ENCODE measurements at regions of chr2 and their contacts with region 1.

Region 1: GRCh38 chr2:9234680-9235387 is 28.2 kb downstream of the ASAP2 start:
- DNase-seq: peak; percentile 86
- H3K4me3 Mint-ChIP-seq: peak overlapping the region; percentile 82
- H3K27ac Mint-ChIP-seq: peak overlapping the region; percentile 100
- H3K4me1 Mint-ChIP-seq: peaks cover 88% of the 10 kb centered on the region
- H3K27me3 Mint-ChIP-seq: no peaks in the 10 kb centered on the region
- CTCF ChIP-seq: no peak

Region 2: GRCh38 chr2:7785700-7786099 is 1449.1 kb before region 1 on chr2:
- CTCF ChIA-PET with region 1: no interaction called
- intact Hi-C with region 1: no loop called
- DNase-seq: no peak
- H3K4me3 Mint-ChIP-seq: no peak overlapping the region
- H3K27ac Mint-ChIP-seq: no peak overlapping the region
- H3K4me1 Mint-ChIP-seq: peaks cover 11% of the 10 kb centered on the region
- H3K27me3 Mint-ChIP-seq: no peaks in the 10 kb centered on the region
- CTCF ChIP-seq: no peak

Region 3: GRCh38 chr2:9142551-9143263 is 92.1 kb before region 1 on chr2:
- CTCF ChIA-PET with region 1: interaction called, 8 read pairs
- intact Hi-C with region 1: loop called (anchors 5 kb)
- DNase-seq: peak; percentile 96
- H3K4me3 Mint-ChIP-seq: peak overlapping the region; percentile 45
- H3K27ac Mint-ChIP-seq: no peak overlapping the region
- H3K4me1 Mint-ChIP-seq: peaks cover 18% of the 10 kb centered on the region
- H3K27me3 Mint-ChIP-seq: no peaks in the 10 kb centered on the region
- CTCF ChIP-seq: peak; percentile 97

Region 4: GRCh38 chr2:9170458-9171138 is 64.2 kb before region 1 on chr2:
- CTCF ChIA-PET with region 1: no interaction called
- intact Hi-C with region 1: loop called (anchors 2 kb)
- DNase-seq: peak; percentile 78
- H3K4me3 Mint-ChIP-seq: peak overlapping the region; percentile 57
- H3K27ac Mint-ChIP-seq: peak overlapping the region; percentile 84
- H3K4me1 Mint-ChIP-seq: peaks cover 54% of the 10 kb centered on the region
- H3K27me3 Mint-ChIP-seq: no peaks in the 10 kb centered on the region
- CTCF ChIP-seq: no peak

Region 5: GRCh38 chr2:9191041-9191481 is 43.8 kb before region 1 on chr2:
- CTCF ChIA-PET with region 1: no interaction called
- intact Hi-C with region 1: no loop called
- DNase-seq: peak; percentile 58
- H3K4me3 Mint-ChIP-seq: no peak overlapping the region
- H3K27ac Mint-ChIP-seq: no peak overlapping the region
- H3K4me1 Mint-ChIP-seq: peaks cover 18% of the 10 kb centered on the region
- H3K27me3 Mint-ChIP-seq: no peaks in the 10 kb centered on the region
- CTCF ChIP-seq: no peak

Region 6: DNA sequence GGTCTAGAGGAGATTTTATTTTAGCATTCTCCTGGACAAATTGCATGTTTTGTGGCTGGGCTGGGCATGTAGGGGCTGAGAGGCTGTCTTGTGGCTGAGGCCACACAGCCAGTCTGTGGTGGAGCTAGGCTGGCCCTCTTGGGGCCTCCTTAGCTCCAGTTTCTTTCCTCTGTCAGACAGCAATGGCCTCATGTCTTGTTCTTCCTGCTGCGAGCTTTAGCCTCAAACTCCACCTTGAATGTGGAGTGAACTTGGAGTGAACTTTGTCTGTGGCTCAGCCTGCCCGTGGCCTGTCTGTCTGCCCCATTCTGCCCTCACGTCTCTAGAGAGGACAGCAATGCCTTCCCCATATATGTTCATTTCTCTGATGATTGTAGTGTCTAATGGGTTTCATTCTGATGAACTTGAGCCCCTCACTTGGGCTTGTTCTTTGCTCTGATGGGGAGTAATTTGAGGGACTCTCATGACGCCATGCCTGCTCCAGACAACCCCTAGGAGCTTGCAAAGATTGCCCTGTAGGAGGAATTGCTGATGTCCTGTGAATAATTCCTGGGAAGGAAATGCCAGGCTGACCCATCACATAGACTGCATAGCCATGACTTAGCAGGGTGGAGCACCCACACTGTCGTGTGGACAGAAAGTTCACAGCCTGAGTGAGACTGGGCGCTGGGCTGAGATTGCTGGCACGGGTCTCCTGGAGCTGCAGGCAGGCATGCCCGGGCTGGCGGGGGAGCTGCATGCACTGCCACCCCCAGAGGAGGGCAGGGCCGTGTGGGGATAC is 14.4 kb after region 1 on chr2:
- CTCF ChIA-PET with region 1: interaction called, 14 read pairs
- intact Hi-C with region 1: loop called (anchors 2 kb)
- DNase-seq: peak; percentile 43
- H3K4me3 Mint-ChIP-seq: peak overlapping the region; percentile 66
- H3K27ac Mint-ChIP-seq: peak overlapping the region; percentile 76
- H3K4me1 Mint-ChIP-seq: peaks cover 81% of the 10 kb centered on the region
- H3K27me3 Mint-ChIP-seq: no peaks in the 10 kb centered on the region
- CTCF ChIP-seq: no peak

Region 7: DNA sequence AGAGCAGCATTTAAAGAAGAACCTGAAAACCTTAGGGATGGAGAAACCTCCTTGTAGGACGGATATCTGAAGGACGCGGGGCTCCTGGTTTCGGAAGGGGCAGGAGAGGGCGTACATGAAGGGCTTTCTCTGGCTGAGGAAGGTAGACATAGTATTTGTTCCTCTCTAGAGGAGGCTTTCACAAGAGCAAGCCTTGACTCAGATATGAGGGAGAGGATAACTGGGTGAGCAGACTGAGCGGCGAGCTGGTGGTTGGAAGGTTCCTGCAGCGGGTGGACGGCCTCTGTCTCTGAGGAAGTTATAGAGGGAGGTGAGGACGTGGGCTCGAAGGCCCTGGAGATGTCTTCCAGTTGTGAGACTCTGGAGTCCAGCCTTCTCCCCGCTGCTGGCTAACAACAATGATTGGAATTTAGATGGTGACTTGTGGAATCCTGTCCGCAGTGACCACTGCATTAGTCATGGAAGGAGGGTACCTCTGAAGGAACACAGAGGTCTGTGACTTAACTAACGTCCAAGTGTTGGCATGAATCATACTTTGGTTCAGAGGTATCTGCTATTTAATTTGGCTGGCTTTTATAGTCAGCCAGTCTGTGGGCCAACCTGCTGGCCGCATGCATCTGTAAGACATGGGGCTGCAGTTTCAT is 52.7 kb after region 1 on chr2:
- CTCF ChIA-PET with region 1: no interaction called
- intact Hi-C with region 1: loop called (anchors 1 kb)
- DNase-seq: peak; percentile 77
- H3K4me3 Mint-ChIP-seq: peak overlapping the region; percentile 51
- H3K27ac Mint-ChIP-seq: peak overlapping the region; percentile 86
- H3K4me1 Mint-ChIP-seq: peaks cover 82% of the 10 kb centered on the region
- H3K27me3 Mint-ChIP-seq: no peaks in the 10 kb centered on the region
- CTCF ChIP-seq: no peak

Region 8: GRCh38 chr2:9333591-9334171 is 98.8 kb after region 1 on chr2:
- CTCF ChIA-PET with region 1: interaction called, 8 read pairs
- intact Hi-C with region 1: loop called (anchors 2 kb)
- DNase-seq: peak; percentile 74
- H3K4me3 Mint-ChIP-seq: no peak overlapping the region
- H3K27ac Mint-ChIP-seq: peak overlapping the region; percentile 76
- H3K4me1 Mint-ChIP-seq: peaks cover 61% of the 10 kb centered on the region
- H3K27me3 Mint-ChIP-seq: no peaks in the 10 kb centered on the region
- CTCF ChIP-seq: peak; percentile 35